ENCODE measurements at regions of chr17 and their contacts with region 1.

Region 1: GRCh38 chr17:38584350-38584925 is 21.3 kb downstream of the SRCIN1 start:
- DNase-seq: peak; percentile 84
- CTCF ChIP-seq: peak; percentile 85

Region 2: DNA sequence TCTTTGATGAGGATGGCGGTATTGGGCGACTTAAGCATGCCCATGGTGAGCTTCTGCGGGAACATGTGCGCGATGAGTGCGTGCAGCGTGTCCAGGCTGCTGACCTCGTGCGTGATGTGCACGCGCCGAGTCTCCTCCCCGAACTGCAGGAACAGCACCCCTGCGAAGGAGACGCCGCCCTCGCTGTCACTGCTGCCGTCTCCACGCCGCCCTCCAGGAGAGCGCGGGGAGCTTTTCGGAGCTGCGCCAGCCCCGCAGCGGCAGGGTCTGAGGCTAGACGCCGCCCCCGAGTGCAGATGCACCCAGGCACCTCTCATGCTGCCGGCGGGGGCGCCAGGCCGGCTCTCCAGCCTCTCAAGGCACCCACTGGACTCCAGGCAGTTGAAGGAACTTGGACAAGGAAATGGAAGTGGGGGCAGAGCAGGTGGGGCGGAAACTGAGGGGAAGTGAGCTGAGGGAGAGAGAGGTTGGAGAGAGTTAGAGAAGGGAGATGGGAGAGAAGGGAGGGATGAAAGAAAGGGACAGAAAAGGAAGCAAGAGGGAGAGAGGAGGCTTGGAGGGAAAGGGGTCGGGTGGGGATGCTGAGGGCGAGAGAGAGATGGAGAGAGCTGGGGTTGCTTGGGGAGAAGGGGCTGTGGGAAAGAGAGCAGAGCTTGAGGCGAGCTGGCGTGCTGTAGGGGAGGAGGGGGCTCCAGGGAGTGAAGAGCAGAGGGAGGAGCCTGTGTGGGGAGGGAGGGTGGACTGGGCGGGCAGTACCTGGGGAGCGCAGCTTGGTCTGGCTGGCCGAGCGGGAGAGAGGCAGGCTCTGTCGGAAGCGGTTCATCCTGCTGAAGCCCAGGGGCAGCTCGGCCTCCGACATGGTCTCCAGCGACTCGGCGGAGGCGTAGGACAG is 20.8 kb before region 1 on chr17:
- CTCF ChIA-PET with region 1: interaction called, 117 read pairs
- POLR2A ChIA-PET with region 1: interaction called, 4 read pairs
- DNase-seq: no peak
- CTCF ChIP-seq: no peak

Region 3: DNA sequence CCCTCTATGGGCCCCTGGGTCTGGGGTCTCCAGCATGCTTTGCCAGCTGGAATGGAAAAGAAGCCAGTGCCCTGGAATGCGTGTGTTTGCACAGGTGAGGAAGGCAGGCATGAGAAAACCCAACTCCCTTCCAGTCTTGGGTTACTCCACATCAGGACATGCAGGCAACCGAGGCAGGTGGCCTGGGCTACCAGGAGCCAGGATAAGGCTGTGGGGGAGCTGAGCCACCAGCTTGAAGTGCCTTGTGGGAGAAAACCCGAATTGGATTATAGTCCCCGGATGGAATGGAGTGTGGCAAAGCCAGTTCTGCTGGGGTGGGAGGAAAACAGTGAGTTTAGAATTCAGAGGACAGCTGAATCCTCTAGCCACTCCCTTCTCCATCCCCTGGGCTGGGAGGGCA is 14.1 kb after region 1 on chr17:
- CTCF ChIA-PET with region 1: interaction called, 19 read pairs
- POLR2A ChIA-PET with region 1: no interaction called
- DNase-seq: peak; percentile 58
- CTCF ChIP-seq: no peak

Region 4: GRCh38 chr17:38654411-38655398 is 70.3 kb after region 1 on chr17:
- CTCF ChIA-PET with region 1: interaction called, 10 read pairs
- POLR2A ChIA-PET with region 1: no interaction called
- DNase-seq: peak; percentile 70
- CTCF ChIP-seq: no peak

Region 5: GRCh38 chr17:38742411-38743308 is 158.2 kb after region 1 on chr17:
- CTCF ChIA-PET with region 1: no interaction called
- POLR2A ChIA-PET with region 1: no interaction called
- DNase-seq: no peak
- CTCF ChIP-seq: no peak

Region 6: DNA sequence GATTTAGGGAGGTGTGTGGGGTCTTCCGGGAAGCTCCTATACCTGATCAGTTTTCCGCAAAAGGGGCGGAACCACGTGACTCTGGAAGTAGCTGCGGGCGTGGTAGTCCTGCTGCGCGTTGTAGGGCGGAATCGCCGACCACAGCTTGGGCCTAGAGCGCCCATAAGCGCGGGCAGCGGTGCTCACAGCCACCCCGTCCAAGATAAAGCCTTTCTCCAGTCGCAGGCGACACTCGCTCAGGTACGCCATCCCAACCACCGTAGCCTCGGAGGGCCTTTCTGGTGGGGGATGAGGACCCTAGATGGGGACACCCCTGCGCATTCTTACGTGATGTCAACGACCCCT is 256.7 kb after region 1 on chr17:
- CTCF ChIA-PET with region 1: no interaction called
- POLR2A ChIA-PET with region 1: no interaction called
- DNase-seq: no peak
- CTCF ChIP-seq: no peak